PC-3 (cell line): ENCODE measurements at regions of chr16 and their contacts with region 1.

Region 1: DNA sequence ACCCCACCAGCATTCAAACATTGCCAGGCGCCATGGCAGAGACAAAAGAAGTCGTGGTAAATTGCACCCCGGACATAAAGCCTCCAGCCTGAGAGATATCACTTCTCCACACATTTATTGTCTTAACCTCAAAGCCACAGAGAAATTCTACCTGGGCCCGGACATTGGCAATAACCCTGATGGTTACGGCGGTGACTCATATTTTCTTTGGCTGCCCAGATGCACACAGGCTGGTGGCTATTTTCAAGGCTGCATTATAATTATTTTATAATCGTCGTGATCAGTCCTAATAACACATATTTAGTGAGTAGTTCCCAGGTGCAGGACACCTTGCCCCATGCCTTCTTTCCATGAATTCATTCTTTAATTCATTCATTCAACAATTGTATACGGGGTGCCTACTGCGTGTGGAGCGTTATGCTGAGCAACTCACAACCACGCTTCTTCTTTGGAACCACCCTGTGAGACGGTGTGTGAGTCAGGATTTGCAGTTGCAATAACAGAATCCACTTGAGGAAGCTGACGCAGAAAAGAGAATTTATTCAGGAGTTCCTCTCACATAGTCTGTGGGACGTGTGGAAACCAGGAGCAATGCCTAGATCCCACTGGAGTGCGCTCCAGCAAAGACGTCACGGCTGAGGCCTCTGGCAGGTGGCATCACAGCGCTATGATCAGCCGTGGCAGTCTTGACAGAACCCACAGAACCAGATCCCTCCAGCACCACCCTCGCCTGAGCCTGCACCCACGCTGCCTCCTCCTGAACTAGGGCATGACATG is 245.7 kb downstream of the FOXL1 start:
- DNase-seq: peak; percentile 80
- ATAC-seq: peak; percentile 69
- H3K4me3 ChIP-seq: peak overlapping the region; percentile 11; the same call in 1 of the 2 replicates
- H3K27ac ChIP-seq: peak overlapping the region; percentile 98
- H3K4me1 ChIP-seq: peaks cover 63% of the 10 kb centered on the region
- H3K27me3 ChIP-seq: no peaks in the 10 kb centered on the region
- CTCF ChIP-seq: no peak

Region 2: GRCh38 chr16:86634292-86634691 is 189.8 kb before region 1 on chr16:
- CTCF ChIA-PET with region 1: no interaction called
- POLR2A ChIA-PET with region 1: no interaction called
- intact Hi-C with region 1: loop called (anchors 2 kb)
- DNase-seq: peak; percentile 16
- ATAC-seq: no peak
- H3K4me3 ChIP-seq: no peak overlapping the region
- H3K27ac ChIP-seq: no peak overlapping the region
- H3K4me1 ChIP-seq: peaks cover 31% of the 10 kb centered on the region
- H3K27me3 ChIP-seq: no peaks in the 10 kb centered on the region
- CTCF ChIP-seq: no peak

Region 3: GRCh38 chr16:86740906-86741799 is 82.9 kb before region 1 on chr16:
- CTCF ChIA-PET with region 1: no interaction called
- POLR2A ChIA-PET with region 1: no interaction called
- intact Hi-C with region 1: loop called (anchors 1 kb)
- DNase-seq: peak; percentile 63
- ATAC-seq: peak; percentile 97
- H3K4me3 ChIP-seq: peak overlapping the region; percentile 66
- H3K27ac ChIP-seq: peak overlapping the region; percentile 79
- H3K4me1 ChIP-seq: peaks cover 16% of the 10 kb centered on the region
- H3K27me3 ChIP-seq: no peaks in the 10 kb centered on the region
- CTCF ChIP-seq: no peak

Region 4: GRCh38 chr16:86874141-86874540 is 50.1 kb after region 1 on chr16:
- CTCF ChIA-PET with region 1: no interaction called
- POLR2A ChIA-PET with region 1: no interaction called
- intact Hi-C with region 1: no loop called
- DNase-seq: peak; percentile 53
- ATAC-seq: peak; percentile 64
- H3K4me3 ChIP-seq: no peak overlapping the region
- H3K27ac ChIP-seq: no peak overlapping the region
- H3K4me1 ChIP-seq: no peaks in the 10 kb centered on the region
- H3K27me3 ChIP-seq: no peaks in the 10 kb centered on the region
- CTCF ChIP-seq: peak; percentile 60

Region 5: DNA sequence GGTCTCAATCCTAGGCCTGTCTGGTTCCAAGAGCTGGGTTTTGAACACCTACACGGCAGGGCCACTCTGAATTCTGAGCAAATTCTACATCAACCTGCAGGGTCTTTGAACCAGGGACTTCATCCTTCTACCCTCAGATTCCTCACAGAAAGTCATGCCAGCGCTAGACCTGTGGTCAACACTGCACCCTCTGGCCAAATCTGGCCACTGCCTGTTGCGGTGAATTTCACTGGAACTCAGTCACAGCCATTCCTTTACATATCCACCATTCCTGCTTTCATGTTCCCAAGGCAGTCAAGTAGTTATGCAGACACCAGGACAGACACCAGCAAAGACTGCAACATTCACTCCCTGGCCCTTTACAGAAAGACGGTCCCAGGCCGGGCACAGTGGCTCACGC is 348.5 kb after region 1 on chr16:
- CTCF ChIA-PET with region 1: interaction called, 10 read pairs
- POLR2A ChIA-PET with region 1: no interaction called
- intact Hi-C with region 1: no loop called
- DNase-seq: no peak
- ATAC-seq: no peak
- H3K4me3 ChIP-seq: no peak overlapping the region
- H3K27ac ChIP-seq: no peak overlapping the region
- H3K4me1 ChIP-seq: no peaks in the 10 kb centered on the region
- H3K27me3 ChIP-seq: no peaks in the 10 kb centered on the region
- CTCF ChIP-seq: peak; percentile 25; the same call in 1 of the 2 replicates